ENCODE measurements at regions of chr1 and their contacts with region 1.

Region 1: DNA sequence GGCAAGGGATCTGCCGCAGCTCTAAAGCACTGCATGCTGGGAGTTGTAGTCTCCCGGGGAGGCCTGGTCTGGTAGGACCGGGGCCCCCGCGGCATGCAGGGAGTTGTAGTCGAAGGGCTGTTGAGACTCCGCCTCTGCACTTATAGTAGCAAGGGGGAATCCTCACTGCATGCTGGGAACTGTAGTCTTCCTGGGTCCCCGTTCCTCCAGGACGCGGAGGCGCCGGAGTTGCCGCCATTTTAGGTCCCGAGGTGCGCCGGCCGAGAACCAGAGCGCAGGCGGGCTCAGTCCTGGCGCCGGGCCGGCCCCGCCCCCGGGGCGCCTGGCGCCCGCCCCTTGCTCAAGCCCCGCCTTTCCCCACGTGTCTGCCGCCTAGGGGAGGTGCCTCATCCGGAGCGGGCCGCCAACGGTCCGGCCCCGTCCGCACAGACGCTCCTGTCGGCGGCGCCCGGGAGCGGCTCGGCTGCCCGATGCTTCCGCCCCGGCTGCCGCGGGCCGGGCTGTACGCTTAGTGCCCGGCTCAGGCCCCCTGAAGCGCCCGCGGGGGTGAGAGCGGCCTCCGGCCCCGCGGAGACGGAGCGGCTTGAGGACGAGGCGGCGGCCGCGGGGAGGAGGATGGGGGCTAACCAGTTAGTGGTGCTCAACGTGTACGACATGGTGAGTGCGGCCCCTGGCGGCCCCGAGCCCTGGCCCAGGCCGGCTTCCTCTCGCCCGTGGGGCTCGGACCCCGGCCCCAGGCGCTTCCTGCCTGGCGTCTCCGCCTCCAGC is at the start of gene DESI2:
- DNase-seq: peak; percentile 98
- ATAC-seq: peak; percentile 91
- H3K4me3 Mint-ChIP-seq: peak within 1 kb of the TSS; percentile 86
- H3K27ac Mint-ChIP-seq: peak within 1 kb of the TSS; percentile 88
- H3K4me1 Mint-ChIP-seq: peaks cover 18% of the 10 kb centered on the region
- H3K27me3 Mint-ChIP-seq: no peaks in the 10 kb centered on the region
- CTCF ChIP-seq: no peak
- total RNA-seq, gene DESI2: 24.2 and 25.8 TPM in 2 replicates

Region 2: GRCh38 chr1:244599937-244600350 is 52.9 kb before region 1 on chr1:
- CTCF ChIA-PET with region 1: interaction called, 10 read pairs
- POLR2A ChIA-PET with region 1: interaction called, 3 read pairs
- intact Hi-C with region 1: loop called (anchors 1 kb)
- DNase-seq: no peak
- ATAC-seq: peak; percentile 91
- H3K4me3 Mint-ChIP-seq: no peak overlapping the region
- H3K27ac Mint-ChIP-seq: no peak overlapping the region
- H3K4me1 Mint-ChIP-seq: peaks cover 11% of the 10 kb centered on the region
- H3K27me3 Mint-ChIP-seq: no peaks in the 10 kb centered on the region
- CTCF ChIP-seq: no peak

Region 3: DNA sequence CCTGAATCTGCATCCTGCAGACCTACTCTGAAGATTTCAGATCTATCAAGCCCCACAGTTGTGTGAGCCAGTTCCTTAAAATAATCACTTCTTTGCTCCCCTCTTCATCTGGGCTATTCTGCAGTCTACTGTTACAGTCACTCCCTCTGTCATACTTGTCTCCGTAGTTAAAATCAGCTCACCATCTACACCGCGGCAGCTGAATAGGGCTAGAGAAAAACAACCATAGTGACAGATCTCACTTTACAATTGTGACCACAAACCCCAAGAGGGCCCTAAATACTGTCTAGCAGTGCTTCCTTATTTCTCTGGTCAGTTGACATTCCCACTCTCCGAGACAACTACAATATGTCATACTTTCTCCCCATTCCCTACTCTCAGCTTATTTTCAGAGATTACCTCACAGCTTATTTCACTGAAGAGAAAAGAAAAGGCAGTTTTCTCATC is 12.9 kb after region 1 on chr1:
- CTCF ChIA-PET with region 1: interaction called, 3 read pairs
- POLR2A ChIA-PET with region 1: interaction called, 6 read pairs
- intact Hi-C with region 1: loop called (anchors 1 kb)
- DNase-seq: no peak
- ATAC-seq: peak; percentile 87
- H3K4me3 Mint-ChIP-seq: no peak overlapping the region
- H3K27ac Mint-ChIP-seq: no peak overlapping the region
- H3K4me1 Mint-ChIP-seq: peaks cover 31% of the 10 kb centered on the region
- H3K27me3 Mint-ChIP-seq: no peaks in the 10 kb centered on the region
- CTCF ChIP-seq: no peak

Region 4: GRCh38 chr1:244730153-244730933 is 77.5 kb after region 1 on chr1:
- CTCF ChIA-PET with region 1: no interaction called
- POLR2A ChIA-PET with region 1: interaction called, 26 read pairs
- intact Hi-C with region 1: loop called (anchors 1 kb)
- DNase-seq: peak; percentile 48
- ATAC-seq: peak; percentile 46
- H3K4me3 Mint-ChIP-seq: peak overlapping the region; percentile 87
- H3K27ac Mint-ChIP-seq: peak overlapping the region; percentile 83
- H3K4me1 Mint-ChIP-seq: peaks cover 23% of the 10 kb centered on the region
- H3K27me3 Mint-ChIP-seq: no peaks in the 10 kb centered on the region
- CTCF ChIP-seq: no peak

Region 5: DNA sequence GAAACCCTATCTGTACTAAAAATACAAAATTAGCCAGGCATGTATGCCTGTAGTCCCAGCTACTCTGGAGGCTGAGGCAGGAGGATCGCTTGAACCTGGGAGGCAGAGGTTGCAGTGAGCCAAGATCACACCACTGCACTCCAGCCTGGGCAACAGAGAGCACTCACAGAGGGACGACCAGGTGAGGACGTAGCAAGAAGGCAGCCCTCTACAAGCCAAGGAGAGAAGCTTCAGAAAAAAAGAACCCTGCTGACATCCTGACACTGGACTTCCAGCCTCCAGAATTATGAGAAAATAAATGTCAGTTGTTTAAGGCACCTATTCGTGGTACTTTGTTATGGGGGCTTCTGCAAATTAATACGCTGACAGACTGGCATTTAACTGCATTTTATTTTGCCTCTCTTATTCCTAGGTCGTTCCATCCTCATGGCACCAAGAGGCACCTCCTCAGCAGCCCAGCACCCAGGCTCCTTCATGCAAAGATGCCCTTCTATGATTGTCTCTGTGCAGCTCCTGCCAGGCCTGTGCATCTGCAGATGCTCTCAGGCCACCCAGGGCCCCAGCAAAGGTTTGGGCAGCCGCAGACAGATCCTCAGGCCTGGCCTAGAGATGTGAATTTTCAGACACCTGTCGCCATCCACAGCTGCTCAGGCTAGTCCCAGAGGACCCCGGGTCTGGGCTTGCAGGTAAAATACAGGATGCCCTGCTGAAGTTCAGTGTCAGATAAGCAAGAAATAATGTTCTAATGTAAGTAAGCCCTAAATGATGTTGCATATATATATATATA is 96.5 kb after region 1 on chr1:
- CTCF ChIA-PET with region 1: no interaction called
- POLR2A ChIA-PET with region 1: no interaction called
- intact Hi-C with region 1: no loop called
- DNase-seq: no peak
- ATAC-seq: no peak
- H3K4me3 Mint-ChIP-seq: no peak overlapping the region
- H3K27ac Mint-ChIP-seq: no peak overlapping the region
- H3K4me1 Mint-ChIP-seq: peaks cover 7% of the 10 kb centered on the region
- H3K27me3 Mint-ChIP-seq: no peaks in the 10 kb centered on the region
- CTCF ChIP-seq: no peak

Region 6: DNA sequence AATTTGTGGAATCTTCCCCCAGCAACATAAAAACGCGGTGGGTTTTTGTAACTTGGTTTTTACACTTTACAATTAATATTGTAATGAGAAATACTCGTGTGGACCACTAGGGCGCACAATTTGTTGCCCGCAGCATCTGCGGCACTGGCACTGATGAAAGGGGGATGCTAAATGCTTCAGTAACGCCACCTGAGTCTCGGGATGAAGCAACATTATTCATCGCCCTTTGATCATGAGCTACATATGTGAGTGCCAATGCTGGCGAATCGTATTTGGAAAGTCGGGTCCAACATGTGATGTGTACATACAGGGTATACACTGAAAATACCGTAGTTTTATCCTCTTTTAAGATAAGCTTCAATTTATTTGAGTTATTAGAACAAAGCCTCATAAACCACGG is 148.4 kb after region 1 on chr1:
- CTCF ChIA-PET with region 1: interaction called, 4 read pairs
- POLR2A ChIA-PET with region 1: no interaction called
- intact Hi-C with region 1: loop called (anchors 2 kb)
- DNase-seq: peak; percentile 36
- ATAC-seq: peak; percentile 96
- H3K4me3 Mint-ChIP-seq: peak overlapping the region; percentile 55
- H3K27ac Mint-ChIP-seq: peak overlapping the region; percentile 59
- H3K4me1 Mint-ChIP-seq: peaks cover 5% of the 10 kb centered on the region
- H3K27me3 Mint-ChIP-seq: peaks cover 8% of the 10 kb centered on the region
- CTCF ChIP-seq: no peak

Region 7: GRCh38 chr1:245074232-245074747 is 421.4 kb after region 1 on chr1:
- CTCF ChIA-PET with region 1: no interaction called
- POLR2A ChIA-PET with region 1: no interaction called
- intact Hi-C with region 1: no loop called
- DNase-seq: no peak
- ATAC-seq: no peak
- H3K4me3 Mint-ChIP-seq: no peak overlapping the region
- H3K27ac Mint-ChIP-seq: no peak overlapping the region
- H3K4me1 Mint-ChIP-seq: no peaks in the 10 kb centered on the region
- H3K27me3 Mint-ChIP-seq: no peaks in the 10 kb centered on the region
- CTCF ChIP-seq: no peak